ENCODE measurements at regions of chr14 and their contacts with region 1.

Region 1: DNA sequence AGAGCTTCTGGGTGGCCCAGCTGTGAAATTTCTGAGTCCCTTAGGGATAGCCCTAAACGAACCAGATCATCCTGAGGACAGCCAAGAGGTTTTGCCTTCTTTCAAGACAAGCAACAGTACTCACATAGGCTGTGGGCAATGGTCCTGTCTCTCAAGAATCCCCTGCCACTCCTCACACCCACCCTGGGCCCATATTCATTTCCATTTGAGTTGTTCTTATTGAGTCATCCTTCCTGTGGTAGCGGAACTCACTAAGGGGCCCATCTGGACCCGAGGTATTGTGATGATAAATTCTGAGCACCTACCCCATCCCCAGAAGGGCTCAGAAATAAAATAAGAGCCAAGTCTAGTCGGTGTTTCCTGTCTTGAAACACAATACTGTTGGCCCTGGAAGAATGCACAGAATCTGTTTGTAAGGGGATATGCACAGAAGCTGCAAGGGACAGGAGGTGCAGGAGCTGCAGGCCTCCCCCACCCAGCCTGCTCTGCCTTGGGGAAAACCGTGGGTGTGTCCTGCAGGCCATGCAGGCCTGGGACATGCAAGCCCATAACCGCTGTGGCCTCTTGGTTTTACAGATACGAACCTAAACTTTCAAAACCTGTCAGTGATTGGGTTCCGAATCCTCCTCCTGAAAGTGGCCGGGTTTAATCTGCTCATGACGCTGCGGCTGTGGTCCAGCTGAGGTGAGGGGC is 38.9 kb downstream of the DAD1 start:
- DNase-seq: peak in 29 of 35 experiments; percentile 36 to 74 (median 57)
- ATAC-seq: peak; percentile 58 to 65 (median 63)
- H3K4me3 ChIP-seq: peak overlapping the region; percentile 18 to 35
- H3K4me3 Mint-ChIP-seq: peak overlapping the region; percentile 71 to 86 (median 77)
- H3K27ac ChIP-seq: peak overlapping the region; percentile 99
- H3K27ac Mint-ChIP-seq: peak overlapping the region; percentile 98 to 99
- H3K4me1 ChIP-seq: peaks cover 74 to 98% of the 10 kb centered on the region in 2 experiments
- H3K4me1 Mint-ChIP-seq: peaks cover 95 to 96% (median 95%) of the 10 kb centered on the region in 3 donors
- H3K27me3 ChIP-seq: no peaks in the 10 kb centered on the region
- H3K27me3 Mint-ChIP-seq: no peaks in the 10 kb centered on the region

Region 2: GRCh38 chr14:21723431-21724045 is 826.6 kb before region 1 on chr14:
- CTCF ChIA-PET with region 1: no interaction called
- POLR2A ChIA-PET with region 1: interaction called in 1 of 2 experiments, 11 read pairs
- DNase-seq: peak in 30 of 35 experiments; percentile 14 to 67 (median 26)
- ATAC-seq: peak; percentile 68 to 84 (median 76)
- H3K4me3 ChIP-seq: peak overlapping the region; percentile 3 to 36
- H3K4me3 Mint-ChIP-seq: peak overlapping the region; percentile 3 to 75 (median 73)
- H3K27ac ChIP-seq: no peak overlapping the region
- H3K27ac Mint-ChIP-seq: peak overlapping the region; percentile 71 to 73
- H3K4me1 ChIP-seq: no peaks in the 10 kb centered on the region
- H3K4me1 Mint-ChIP-seq: peaks cover 0 to 2% (median 0%) of the 10 kb centered on the region in 3 donors
- H3K27me3 ChIP-seq: peaks cover 2 to 8% of the 10 kb centered on the region in 2 experiments
- H3K27me3 Mint-ChIP-seq: peaks cover 23 to 29% of the 10 kb centered on the region in 2 donors

Region 3: DNA sequence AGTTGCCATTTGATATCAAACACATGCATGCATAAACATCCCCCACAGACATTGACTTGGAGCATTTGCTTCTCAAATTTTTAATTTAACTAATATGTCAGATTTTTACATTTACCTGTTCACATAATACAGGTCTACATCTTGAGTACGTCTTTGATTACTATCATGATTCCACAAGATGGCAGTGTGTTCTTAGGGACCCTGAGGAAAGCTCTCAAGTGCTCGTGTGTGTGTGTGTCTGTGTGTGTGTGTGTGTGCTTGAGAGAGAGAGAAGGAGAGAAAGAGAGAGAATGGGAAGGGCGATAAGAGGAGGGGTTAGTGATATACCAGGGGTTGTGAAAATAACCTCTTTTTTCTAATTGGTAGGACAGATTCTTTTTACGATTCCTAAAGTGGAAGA is 709.4 kb before region 1 on chr14:
- CTCF ChIA-PET with region 1: no interaction called
- POLR2A ChIA-PET with region 1: interaction called in 1 of 2 experiments, 15 read pairs
- DNase-seq: peak in 3 of 35 experiments; percentile 7 to 50 (median 9)
- ATAC-seq: peak; percentile 15 to 61 (median 54)
- H3K4me3 ChIP-seq: peak overlapping the region in 1 of 2 donors; percentile 23
- H3K4me3 Mint-ChIP-seq: peak overlapping the region; percentile 58 to 71 (median 60)
- H3K27ac ChIP-seq: no peak overlapping the region
- H3K27ac Mint-ChIP-seq: peak overlapping the region in 1 of 2 donors; percentile 84
- H3K4me1 ChIP-seq: no peaks in the 10 kb centered on the region
- H3K4me1 Mint-ChIP-seq: peaks cover 2 to 10% (median 10%) of the 10 kb centered on the region in 3 donors
- H3K27me3 ChIP-seq: peaks cover 0 to 6% of the 10 kb centered on the region in 2 experiments
- H3K27me3 Mint-ChIP-seq: peaks cover 13 to 19% of the 10 kb centered on the region in 2 donors

Region 4: GRCh38 chr14:22231018-22231417 is 319.1 kb before region 1 on chr14:
- CTCF ChIA-PET with region 1: no interaction called
- POLR2A ChIA-PET with region 1: no interaction called
- DNase-seq: peak in 17 of 35 experiments; percentile 1 to 36 (median 8)
- ATAC-seq: peak; percentile 58 to 82 (median 80)
- H3K4me3 ChIP-seq: no peak overlapping the region
- H3K4me3 Mint-ChIP-seq: peak overlapping the region in 1 of 3 donors; percentile 48
- H3K27ac ChIP-seq: no peak overlapping the region
- H3K27ac Mint-ChIP-seq: peak overlapping the region; percentile 61 to 72
- H3K4me1 ChIP-seq: peaks cover 4 to 7% of the 10 kb centered on the region in 2 experiments
- H3K4me1 Mint-ChIP-seq: peaks cover 9 to 25% (median 16%) of the 10 kb centered on the region in 3 donors
- H3K27me3 ChIP-seq: no peaks in the 10 kb centered on the region
- H3K27me3 Mint-ChIP-seq: no peaks in the 10 kb centered on the region

Region 5: GRCh38 chr14:22505697-22506377 is 44.3 kb before region 1 on chr14:
- CTCF ChIA-PET with region 1: interaction called in 1 of 2 experiments, 8 read pairs
- POLR2A ChIA-PET with region 1: interaction called, 3 to 11 read pairs
- DNase-seq: peak in 1 of 35 experiments; percentile 54
- ATAC-seq: peak; percentile 17 to 55 (median 46)
- H3K4me3 ChIP-seq: peak overlapping the region; percentile 52 to 58
- H3K4me3 Mint-ChIP-seq: peak overlapping the region; percentile 82 to 86 (median 83)
- H3K27ac ChIP-seq: peak overlapping the region; percentile 90
- H3K27ac Mint-ChIP-seq: peak overlapping the region; percentile 95 to 96
- H3K4me1 ChIP-seq: peaks cover 26 to 55% of the 10 kb centered on the region in 2 experiments
- H3K4me1 Mint-ChIP-seq: peaks cover 55 to 84% (median 75%) of the 10 kb centered on the region in 3 donors
- H3K27me3 ChIP-seq: no peaks in the 10 kb centered on the region
- H3K27me3 Mint-ChIP-seq: no peaks in the 10 kb centered on the region

Region 6: GRCh38 chr14:22536853-22537338 is 13.2 kb before region 1 on chr14:
- CTCF ChIA-PET with region 1: interaction called, 4 to 23 read pairs
- POLR2A ChIA-PET with region 1: interaction called, 6 to 13 read pairs
- DNase-seq: peak in 29 of 35 experiments; percentile 41 to 86 (median 57)
- ATAC-seq: peak; percentile 82 to 93 (median 92)
- H3K4me3 ChIP-seq: peak overlapping the region; percentile 38 to 42
- H3K4me3 Mint-ChIP-seq: peak overlapping the region; percentile 77 to 86 (median 83)
- H3K27ac ChIP-seq: peak overlapping the region; percentile 88
- H3K27ac Mint-ChIP-seq: peak overlapping the region; percentile 98 to 99
- H3K4me1 ChIP-seq: peaks cover 87 to 92% of the 10 kb centered on the region in 2 experiments
- H3K4me1 Mint-ChIP-seq: peaks cover 95 to 96% (median 96%) of the 10 kb centered on the region in 3 donors
- H3K27me3 ChIP-seq: no peaks in the 10 kb centered on the region
- H3K27me3 Mint-ChIP-seq: no peaks in the 10 kb centered on the region

Measured in T-cell (primary cell).